ENCODE measurements at regions of chr2 and their contacts with region 1.

Region 1: GRCh38 chr2:113407446-113408099 is 29.9 kb upstream of the ZNG1B start:
- DNase-seq: peak; percentile 52 to 70 (median 64)
- H3K4me3 ChIP-seq: no peak overlapping the region
- H3K27ac ChIP-seq: no peak overlapping the region
- H3K4me1 ChIP-seq: peaks cover 0 to 29% (median 22%) of the 10 kb centered on the region in 4 experiments
- H3K27me3 ChIP-seq: no peaks in the 10 kb centered on the region

Region 2: DNA sequence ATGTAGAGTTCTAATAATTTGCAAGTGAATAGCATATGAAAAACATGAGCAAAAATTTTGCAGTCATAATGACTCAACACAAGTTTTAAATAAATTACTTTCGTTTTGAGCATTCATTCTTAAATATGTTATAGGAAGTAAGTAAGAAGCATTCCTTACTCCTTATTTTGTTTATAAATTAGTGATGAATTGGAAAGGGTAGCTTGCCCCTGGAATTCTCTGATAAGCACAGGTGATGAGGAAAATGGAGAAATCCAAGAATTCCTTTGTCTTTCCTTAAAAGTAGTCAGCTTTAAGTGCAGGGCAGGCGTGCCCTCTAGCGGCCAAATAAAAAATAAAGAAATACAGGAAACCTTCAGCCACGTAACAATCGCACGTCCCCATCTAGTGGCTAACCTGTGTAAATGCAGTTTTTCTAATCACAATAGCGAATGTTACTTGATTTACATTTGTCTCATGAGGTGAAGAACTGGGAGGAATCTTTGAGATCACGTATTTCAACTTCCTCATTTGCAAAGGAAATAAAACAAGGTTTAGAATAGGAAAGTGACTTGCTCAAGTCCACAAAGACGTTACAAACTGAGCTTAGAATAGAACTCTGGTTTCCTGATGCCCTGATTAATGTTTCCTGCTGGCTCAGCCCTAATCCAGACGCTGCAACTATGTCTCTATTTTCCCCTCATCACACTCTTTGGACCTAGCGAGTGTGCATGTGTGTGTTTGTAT is 17.3 kb before region 1 on chr2:
- CTCF ChIA-PET with region 1: interaction called, 10 read pairs
- POLR2A ChIA-PET with region 1: no interaction called
- DNase-seq: peak; percentile 91 to 98 (median 95)
- H3K4me3 ChIP-seq: peak overlapping the region in 6 of 7 experiments; percentile 47 to 76 (median 64)
- H3K27ac ChIP-seq: peak overlapping the region; percentile 74 to 87
- H3K4me1 ChIP-seq: peaks cover 0 to 11% (median 8%) of the 10 kb centered on the region in 4 experiments
- H3K27me3 ChIP-seq: no peaks in the 10 kb centered on the region

Region 3: GRCh38 chr2:113686537-113686936 is 279.0 kb after region 1 on chr2:
- CTCF ChIA-PET with region 1: no interaction called
- POLR2A ChIA-PET with region 1: no interaction called
- DNase-seq: no peak
- H3K4me3 ChIP-seq: no peak overlapping the region
- H3K27ac ChIP-seq: no peak overlapping the region
- H3K4me1 ChIP-seq: peaks cover 0 to 3% (median 0%) of the 10 kb centered on the region in 4 experiments
- H3K27me3 ChIP-seq: no peaks in the 10 kb centered on the region

Measured in common myeloid progenitor, CD34-positive (primary cell).